Activated naive CD4-positive, alpha-beta T cell treated with anti-CD3 and anti-CD28 coated beads for 36 hours (primary cell): ENCODE measurements at regions of chr19 and their contacts with region 1.

Region 1: GRCh38 chr19:36214386-36215275 is at the starts of genes ZNF146 and ZNF565:
- DNase-seq: peak; percentile 98
- H3K4me3 Mint-ChIP-seq: no peak within 1 kb of the TSS
- H3K27ac Mint-ChIP-seq: no peak within 1 kb of the TSS
- H3K4me1 Mint-ChIP-seq: peaks cover 27% of the 10 kb centered on the region
- H3K27me3 Mint-ChIP-seq: no peaks in the 10 kb centered on the region
- total RNA-seq, gene ZNF146: 78.2 to 79.2 TPM
- total RNA-seq, gene ZNF565: 2.0 to 2.2 TPM

Region 2: GRCh38 chr19:36014029-36014924 is 200.4 kb before region 1 on chr19 and contains the start of gene ALKBH6:
- CTCF ChIA-PET with region 1: no interaction called
- intact Hi-C with region 1: loop called (anchors 1 kb)
- DNase-seq: peak; percentile 100
- H3K4me3 Mint-ChIP-seq: peak within 1 kb of the TSS; percentile 97
- H3K27ac Mint-ChIP-seq: peak within 1 kb of the TSS; percentile 94
- H3K4me1 Mint-ChIP-seq: peaks cover 27% of the 10 kb centered on the region
- H3K27me3 Mint-ChIP-seq: no peaks in the 10 kb centered on the region
- total RNA-seq, gene ALKBH6: 36.9 to 37.8 TPM

Region 3: GRCh38 chr19:36121486-36122124 is 93.0 kb before region 1 on chr19:
- CTCF ChIA-PET with region 1: no interaction called
- intact Hi-C with region 1: no loop called
- DNase-seq: no peak
- H3K4me3 Mint-ChIP-seq: no peak overlapping the region
- H3K27ac Mint-ChIP-seq: no peak overlapping the region
- H3K4me1 Mint-ChIP-seq: peaks cover 12% of the 10 kb centered on the region
- H3K27me3 Mint-ChIP-seq: no peaks in the 10 kb centered on the region

Region 4: GRCh38 chr19:36132489-36132891 is 82.1 kb before region 1 on chr19:
- CTCF ChIA-PET with region 1: interaction called, 4 read pairs
- intact Hi-C with region 1: loop called (anchors 1 kb)
- DNase-seq: peak; percentile 61
- H3K4me3 Mint-ChIP-seq: no peak overlapping the region
- H3K27ac Mint-ChIP-seq: peak overlapping the region; percentile 18
- H3K4me1 Mint-ChIP-seq: peaks cover 32% of the 10 kb centered on the region
- H3K27me3 Mint-ChIP-seq: no peaks in the 10 kb centered on the region

Region 5: GRCh38 chr19:36257520-36257876 is 42.9 kb after region 1 on chr19:
- CTCF ChIA-PET with region 1: no interaction called
- intact Hi-C with region 1: no loop called
- DNase-seq: no peak
- H3K4me3 Mint-ChIP-seq: no peak overlapping the region
- H3K27ac Mint-ChIP-seq: no peak overlapping the region
- H3K4me1 Mint-ChIP-seq: no peaks in the 10 kb centered on the region
- H3K27me3 Mint-ChIP-seq: no peaks in the 10 kb centered on the region

Region 6: GRCh38 chr19:36418287-36419001 is 203.8 kb after region 1 on chr19 and contains the start of gene ZFP82:
- CTCF ChIA-PET with region 1: interaction called, 3 read pairs
- intact Hi-C with region 1: loop called (anchors 10 kb)
- DNase-seq: peak; percentile 81
- H3K4me3 Mint-ChIP-seq: peak within 1 kb of the TSS; percentile 92
- H3K27ac Mint-ChIP-seq: peak within 1 kb of the TSS; percentile 92
- H3K4me1 Mint-ChIP-seq: peaks cover 19% of the 10 kb centered on the region
- H3K27me3 Mint-ChIP-seq: peaks cover 18% of the 10 kb centered on the region
- total RNA-seq, gene ZFP82: 2.4 to 2.6 TPM

Region 7: DNA sequence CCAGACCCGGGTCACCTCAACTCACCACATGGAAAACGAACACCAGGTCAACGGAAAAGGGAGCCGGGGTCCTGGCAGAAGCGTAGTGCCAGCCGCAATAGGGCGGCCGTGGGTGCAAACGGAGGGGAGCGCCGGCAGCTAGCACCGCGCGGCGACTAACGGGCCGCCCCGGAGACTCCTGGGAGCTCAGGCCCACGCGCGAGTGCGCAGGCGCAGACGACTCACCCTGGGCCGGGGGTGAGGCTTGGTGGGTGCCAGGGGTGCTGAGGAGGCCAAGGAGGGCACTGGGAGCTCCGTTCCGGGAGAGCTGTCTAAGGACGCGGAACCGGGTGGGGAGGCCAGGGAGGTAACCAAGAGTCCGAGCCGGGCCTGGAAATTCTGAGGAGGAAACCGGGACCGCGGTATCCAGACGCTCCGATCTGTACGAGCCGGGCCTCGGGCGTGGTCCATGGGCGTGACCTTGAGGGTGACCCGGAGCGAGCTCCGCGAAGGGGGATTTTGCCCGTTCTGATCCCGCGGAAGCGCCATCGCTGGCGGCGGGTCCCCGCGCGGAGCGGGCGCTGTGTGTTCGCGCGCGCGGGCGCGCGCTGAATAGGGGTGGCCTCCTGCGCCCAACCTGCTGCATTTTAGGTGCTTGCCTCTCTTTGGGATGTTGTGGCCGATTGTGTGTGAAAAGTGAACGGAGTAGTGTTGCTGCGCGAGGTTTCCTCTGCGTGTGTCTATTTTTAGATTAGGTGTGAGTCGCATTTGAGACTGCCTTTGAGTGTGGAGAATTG is 390.7 kb after region 1 on chr19 and contains the start of gene ZNF382:
- CTCF ChIA-PET with region 1: no interaction called
- intact Hi-C with region 1: loop called (anchors 1 kb)
- DNase-seq: peak; percentile 87
- H3K4me3 Mint-ChIP-seq: peak within 1 kb of the TSS; percentile 81
- H3K27ac Mint-ChIP-seq: peak within 1 kb of the TSS; percentile 93
- H3K4me1 Mint-ChIP-seq: peaks cover 19% of the 10 kb centered on the region
- H3K27me3 Mint-ChIP-seq: no peaks in the 10 kb centered on the region
- total RNA-seq, gene ZNF382: 7.5 to 7.6 TPM

Region 8: DNA sequence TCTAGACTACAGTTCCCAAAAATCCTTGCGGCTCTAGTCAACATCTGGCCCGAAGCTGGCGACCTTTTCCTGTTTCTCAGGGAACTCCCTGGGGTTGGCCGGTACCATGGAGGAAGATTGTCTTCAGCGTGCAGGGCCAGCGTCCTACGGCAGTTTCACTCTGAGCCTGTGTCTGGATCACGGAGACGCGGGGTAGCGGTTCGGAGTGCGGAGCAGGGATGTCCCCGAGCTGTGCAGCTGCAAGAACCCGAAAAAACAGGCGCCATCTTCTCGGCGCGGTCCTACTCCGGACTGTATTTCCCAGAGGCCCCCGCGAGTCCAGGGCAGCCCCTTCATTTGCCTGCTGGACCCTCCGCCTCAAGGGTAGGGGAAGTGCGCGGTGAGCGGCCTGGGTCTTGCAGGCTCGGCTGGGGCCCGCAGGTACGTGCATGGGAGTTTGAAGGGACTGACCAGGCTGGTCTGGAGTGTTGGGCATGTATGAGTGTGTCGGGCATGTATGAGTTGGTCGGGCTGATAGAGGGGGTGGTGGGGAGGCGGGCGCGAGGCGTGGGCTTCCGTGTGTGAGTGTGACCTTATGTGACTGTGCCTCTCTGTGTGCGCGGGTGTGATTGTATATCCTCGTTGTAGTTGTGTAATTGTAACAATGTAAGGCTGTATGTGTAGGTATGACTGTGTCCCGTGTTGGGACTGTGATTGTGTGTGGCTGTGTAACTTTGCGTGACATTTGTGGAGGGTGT is 1003.4 kb after region 1 on chr19 and contains the start of gene ZNF383:
- CTCF ChIA-PET with region 1: no interaction called
- intact Hi-C with region 1: loop called (anchors 10 kb)
- DNase-seq: peak; percentile 87
- H3K4me3 Mint-ChIP-seq: peak within 1 kb of the TSS; percentile 88
- H3K27ac Mint-ChIP-seq: peak within 1 kb of the TSS; percentile 92
- H3K4me1 Mint-ChIP-seq: peaks cover 16% of the 10 kb centered on the region
- H3K27me3 Mint-ChIP-seq: no peaks in the 10 kb centered on the region
- total RNA-seq, gene ZNF383: 8.4 to 9.1 TPM